Activated CD4-positive, alpha-beta T cell treated with anti-CD3 and anti-CD28 coated beads for 36 hours (primary cell): ENCODE measurements at regions of chr1 and their contacts with region 1.

Region 1: DNA sequence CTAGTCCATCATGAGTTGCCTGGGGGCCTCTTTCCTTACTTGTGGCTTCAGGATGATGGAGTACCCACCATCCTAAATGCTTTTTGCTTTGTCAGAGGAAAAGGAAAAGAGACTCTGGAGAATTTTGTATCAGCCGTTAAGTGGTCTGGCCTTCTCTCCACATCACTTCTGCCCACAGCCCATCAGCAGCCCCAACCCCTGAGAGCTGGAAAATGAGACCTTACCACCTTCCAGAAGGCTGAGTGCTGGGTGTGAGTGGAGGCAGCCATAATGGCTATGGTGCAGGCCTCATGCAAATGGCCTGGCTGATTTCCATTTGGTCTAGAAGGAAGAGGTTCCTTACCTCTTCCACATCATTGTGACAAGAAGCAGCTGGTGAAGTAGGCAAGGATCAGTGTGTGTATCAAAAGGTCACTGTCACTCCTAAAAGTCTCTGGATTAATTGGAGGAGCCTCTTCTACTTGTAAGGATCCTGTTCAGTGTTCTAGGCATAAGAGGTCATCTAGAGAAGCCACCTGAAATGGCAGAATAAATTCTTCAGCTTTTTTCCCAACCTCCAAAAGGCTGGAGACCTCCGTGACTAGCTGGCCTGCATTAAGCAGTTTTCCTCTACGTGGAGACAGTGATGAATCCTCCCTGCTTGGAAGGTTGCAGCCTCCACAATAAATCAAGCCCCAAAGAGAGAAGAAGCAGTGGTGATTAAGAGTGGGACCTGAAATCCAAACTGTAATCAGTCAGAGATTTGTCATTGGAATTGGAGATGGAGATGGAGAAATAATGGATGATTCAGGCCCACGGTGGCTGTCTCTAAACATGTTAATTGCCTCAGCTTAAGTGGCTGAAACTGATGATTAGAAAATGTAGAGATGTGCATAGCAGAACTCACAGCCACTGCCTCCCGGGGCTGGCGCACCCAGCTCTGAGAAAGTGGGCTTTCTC is 111.5 kb downstream of the CNIH3 start:
- DNase-seq: no peak
- ATAC-seq: no peak
- H3K4me3 Mint-ChIP-seq: no peak overlapping the region
- H3K27ac Mint-ChIP-seq: no peak overlapping the region
- H3K4me1 Mint-ChIP-seq: peaks cover 2% of the 10 kb centered on the region
- H3K27me3 Mint-ChIP-seq: no peaks in the 10 kb centered on the region

Region 2: GRCh38 chr1:224528900-224529299 is 198.7 kb before region 1 on chr1:
- CTCF ChIA-PET with region 1: no interaction called
- POLR2A ChIA-PET with region 1: no interaction called
- intact Hi-C with region 1: no loop called
- DNase-seq: no peak
- ATAC-seq: no peak
- H3K4me3 Mint-ChIP-seq: no peak overlapping the region
- H3K27ac Mint-ChIP-seq: no peak overlapping the region
- H3K4me1 Mint-ChIP-seq: no peaks in the 10 kb centered on the region
- H3K27me3 Mint-ChIP-seq: no peaks in the 10 kb centered on the region

Region 3: GRCh38 chr1:225441314-225442122 is 713.9 kb after region 1 on chr1:
- CTCF ChIA-PET with region 1: no interaction called
- POLR2A ChIA-PET with region 1: interaction called, 11 read pairs
- intact Hi-C with region 1: no loop called
- DNase-seq: no peak
- ATAC-seq: no peak
- H3K4me3 Mint-ChIP-seq: no peak overlapping the region
- H3K27ac Mint-ChIP-seq: peak overlapping the region; percentile 82
- H3K4me1 Mint-ChIP-seq: peaks cover 49% of the 10 kb centered on the region
- H3K27me3 Mint-ChIP-seq: no peaks in the 10 kb centered on the region